ENCODE measurements at regions of chr3 and their contacts with region 1.

Region 1: DNA sequence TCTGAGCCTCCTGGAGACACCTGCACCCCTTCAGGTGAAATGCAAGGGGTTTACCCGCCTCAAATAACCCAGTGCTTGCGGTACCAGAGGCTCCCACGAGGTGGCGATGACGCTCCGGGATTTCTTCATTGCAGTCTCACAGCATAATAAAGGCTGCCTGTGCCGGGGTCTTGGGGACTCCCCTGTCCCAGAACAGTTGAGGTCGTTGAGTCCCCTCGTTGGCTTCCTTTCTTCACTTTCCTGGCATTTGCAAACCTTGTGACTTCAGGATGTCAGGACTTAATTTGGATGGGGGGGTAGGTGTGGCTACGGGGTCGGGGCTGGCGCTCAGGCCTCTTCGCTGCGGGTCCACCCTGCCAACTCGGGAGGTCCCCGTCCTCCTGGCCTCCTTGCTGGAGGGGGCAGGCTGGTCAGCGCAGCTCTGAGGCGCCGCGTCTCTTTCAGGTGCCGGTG is 1.3 kb downstream of the GNAT1 start:
- H3K4me3 ChIP-seq: no peak overlapping the region
- H3K27ac ChIP-seq: no peak overlapping the region
- H3K4me1 ChIP-seq: no peaks in the 10 kb centered on the region
- CTCF ChIP-seq: peak; percentile 42

Region 2: DNA sequence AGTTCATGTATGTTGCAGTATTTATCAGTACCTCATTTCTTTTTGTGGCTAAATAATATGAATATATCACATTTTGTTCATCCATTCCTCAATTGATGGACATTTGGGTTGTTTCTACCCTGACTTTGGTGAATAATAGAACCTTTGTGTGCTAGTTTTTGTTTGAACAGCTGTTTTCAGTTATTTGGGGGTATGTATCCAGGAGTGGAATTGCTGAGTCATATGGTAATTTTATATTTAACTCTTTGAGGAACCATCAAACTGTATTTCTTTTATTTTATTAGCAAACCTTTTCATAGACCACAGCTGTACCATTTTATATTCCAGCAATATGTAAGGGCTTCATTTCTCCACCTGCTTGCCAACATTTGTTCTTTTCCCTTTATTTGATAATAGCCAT is 142.4 kb before region 1 on chr3:
- CTCF ChIA-PET with region 1: no interaction called
- POLR2A ChIA-PET with region 1: no interaction called
- H3K4me3 ChIP-seq: no peak overlapping the region
- H3K27ac ChIP-seq: no peak overlapping the region
- H3K4me1 ChIP-seq: no peaks in the 10 kb centered on the region
- CTCF ChIP-seq: no peak

Region 3: DNA sequence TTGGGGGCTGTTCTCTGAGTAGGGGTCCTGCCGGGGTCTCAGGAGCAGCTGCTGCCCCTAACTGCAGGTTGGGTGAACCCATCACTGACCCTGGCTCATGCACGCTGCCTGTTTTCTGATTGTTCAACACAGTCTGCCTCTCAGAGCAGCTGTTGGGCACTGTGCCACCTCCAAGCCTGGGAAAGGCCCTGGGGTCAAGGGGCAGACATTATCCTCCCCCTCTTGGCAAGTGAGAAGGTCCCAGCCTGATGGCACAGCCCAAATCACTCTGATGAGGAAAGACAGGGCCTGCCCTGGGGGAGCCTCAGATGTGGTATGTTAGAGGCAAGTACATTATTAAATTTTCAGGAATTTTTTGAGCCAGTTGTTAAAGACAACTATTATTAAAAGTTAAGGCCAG is 15.4 kb before region 1 on chr3:
- CTCF ChIA-PET with region 1: interaction called, 19 read pairs
- POLR2A ChIA-PET with region 1: no interaction called
- H3K4me3 ChIP-seq: no peak overlapping the region
- H3K27ac ChIP-seq: no peak overlapping the region
- H3K4me1 ChIP-seq: no peaks in the 10 kb centered on the region
- CTCF ChIP-seq: no peak

Region 4: DNA sequence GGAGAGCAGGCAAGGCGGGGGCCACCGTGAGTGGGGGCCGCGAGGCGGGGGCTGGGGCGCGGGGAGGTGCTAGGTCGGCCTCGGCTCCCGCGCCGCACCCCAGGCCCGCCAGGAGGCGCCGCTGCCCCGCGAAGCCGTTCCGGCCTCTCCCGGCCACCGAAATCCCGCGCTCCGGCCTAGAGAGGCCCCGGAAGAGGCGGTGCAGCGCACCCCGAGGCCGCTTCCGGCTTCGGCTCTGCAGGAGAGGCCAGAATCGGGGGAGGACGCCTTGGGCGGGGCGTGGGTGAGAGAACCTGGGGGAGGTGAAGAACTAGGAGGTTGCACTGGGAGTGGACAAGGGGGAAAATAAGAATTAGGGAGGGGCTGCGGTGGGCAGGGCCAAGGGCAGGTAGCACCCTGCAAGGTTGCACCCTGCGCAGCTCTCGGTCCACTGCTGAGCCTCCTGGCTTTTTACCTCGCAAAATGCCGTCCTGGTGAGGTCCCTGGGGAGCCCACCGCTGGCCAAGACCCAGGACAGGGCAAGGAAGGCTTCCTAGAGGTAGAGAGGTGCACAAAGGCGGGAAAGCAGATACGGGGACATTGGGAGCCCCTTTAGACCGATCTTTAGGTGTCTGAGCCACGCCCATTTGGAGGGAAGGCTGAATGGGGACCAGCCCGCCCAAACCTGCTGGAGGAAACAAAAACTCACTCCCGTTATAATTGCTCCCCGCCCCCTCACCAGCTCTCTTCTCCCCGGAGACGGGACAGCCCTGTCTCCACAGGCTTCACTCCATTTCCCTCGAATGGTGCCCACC is 34.9 kb after region 1 on chr3:
- CTCF ChIA-PET with region 1: interaction called, 237 read pairs
- POLR2A ChIA-PET with region 1: interaction called, 7 read pairs
- H3K4me3 ChIP-seq: peak overlapping the region; percentile 55
- H3K27ac ChIP-seq: peak overlapping the region; percentile 60; the same call in 1 of the 2 replicates
- H3K4me1 ChIP-seq: no peaks in the 10 kb centered on the region
- CTCF ChIP-seq: peak; percentile 56

Region 5: DNA sequence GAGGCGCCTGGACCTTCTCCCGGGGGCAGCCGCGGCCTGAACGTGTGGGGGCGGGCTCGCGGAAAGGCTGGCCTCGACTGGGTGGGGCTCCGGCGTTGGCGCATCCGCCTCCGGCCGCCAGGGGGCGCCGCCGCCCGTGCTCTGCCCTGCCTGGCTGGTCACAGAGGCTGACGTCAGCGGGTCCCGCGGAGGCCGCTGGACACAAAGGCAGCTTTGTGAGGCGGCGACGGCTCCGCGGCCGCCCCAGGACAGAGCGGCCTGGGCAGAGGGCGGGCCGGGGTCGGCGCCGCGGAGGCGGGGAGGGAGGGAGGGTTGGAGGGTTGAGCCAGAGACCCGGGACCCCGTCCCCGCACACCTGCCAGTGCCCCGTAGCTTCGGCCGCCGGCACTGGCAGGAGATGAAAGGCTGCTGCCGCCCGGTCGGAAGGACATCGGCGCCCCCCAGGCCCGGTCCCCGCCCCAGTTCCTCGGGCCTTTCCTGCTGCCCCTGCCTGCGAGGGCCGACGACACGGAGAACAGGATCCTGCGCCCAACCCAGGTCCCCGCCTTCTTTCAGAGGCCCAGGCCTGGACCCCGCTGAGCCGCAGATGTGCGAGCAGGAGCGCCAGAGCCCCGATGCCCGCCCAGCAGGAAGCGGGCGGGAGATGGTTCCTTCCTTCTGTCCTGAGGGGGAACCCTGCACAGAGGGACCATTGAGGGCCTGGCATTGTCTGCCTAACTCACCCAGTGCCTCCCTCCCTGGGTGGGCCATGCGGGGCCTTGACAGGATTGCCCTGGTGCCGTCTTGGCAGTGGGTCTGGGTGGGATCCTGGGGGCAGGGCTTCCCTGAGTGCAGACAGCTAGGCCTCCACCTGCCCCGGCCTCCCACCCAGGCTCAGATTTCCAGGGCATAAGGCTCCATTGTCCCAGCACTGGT is 67.6 kb after region 1 on chr3:
- CTCF ChIA-PET with region 1: interaction called, 16 read pairs
- POLR2A ChIA-PET with region 1: interaction called, 3 read pairs
- H3K4me3 ChIP-seq: peak overlapping the region; percentile 36
- H3K27ac ChIP-seq: peak overlapping the region; percentile 86
- H3K4me1 ChIP-seq: peaks cover 3% of the 10 kb centered on the region; the same call in 1 of the 2 replicates
- CTCF ChIP-seq: peak; percentile 75; the same call in 1 of the 2 replicates

Measured in HEK293 (cell line).